Activated naive CD4-positive, alpha-beta T cell treated with anti-CD3 and anti-CD28 coated beads, Interleukin-2, amount 10 ng/mL, durations not matched to agents 7 days and 5 days (primary cell): ENCODE measurements at regions of chr9 and their contacts with region 1.

Region 1: DNA sequence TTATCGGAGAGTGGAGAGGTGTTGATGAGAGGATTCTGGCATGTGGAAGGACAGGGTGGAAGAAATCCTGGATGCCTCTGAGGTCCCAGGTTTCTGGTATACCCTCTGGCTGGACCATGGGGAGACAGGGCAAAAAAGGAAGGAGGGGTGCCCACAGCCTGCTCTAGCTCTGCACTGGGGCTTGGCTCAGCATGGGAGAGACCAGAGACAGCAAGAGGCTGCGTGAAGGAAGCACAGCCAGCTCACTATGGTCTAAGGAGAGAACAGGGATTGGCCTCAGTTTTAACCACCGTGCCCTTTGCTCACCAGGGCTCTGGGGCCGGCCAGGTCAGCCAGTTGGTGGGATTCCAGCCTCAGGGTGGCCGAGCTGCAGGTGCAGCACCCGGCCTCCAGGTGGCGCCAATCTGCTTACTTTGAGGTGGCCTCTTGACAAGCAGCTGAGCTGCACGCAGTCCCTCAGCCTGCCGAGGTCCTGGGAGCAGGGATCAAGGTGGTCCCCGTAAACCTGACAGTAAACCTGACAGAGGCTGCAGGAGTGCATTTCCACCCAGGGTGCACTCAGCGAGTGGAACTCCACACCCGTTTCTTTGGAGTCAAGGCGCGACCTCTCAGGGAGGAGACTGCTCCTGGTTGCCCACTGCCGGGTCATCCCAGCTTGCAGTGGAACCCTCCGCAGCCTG is 25.0 kb upstream of the SPTLC1 start:
- DNase-seq: peak; percentile 83
- H3K4me3 Mint-ChIP-seq: no peak overlapping the region
- H3K27ac Mint-ChIP-seq: no peak overlapping the region
- H3K4me1 Mint-ChIP-seq: peaks cover 7% of the 10 kb centered on the region
- H3K27me3 Mint-ChIP-seq: peaks cover 87% of the 10 kb centered on the region

Region 2: GRCh38 chr9:92115071-92115858 is 24.9 kb before region 1 on chr9 and contains the start of gene SPTLC1:
- CTCF ChIA-PET with region 1: interaction called, 12 read pairs
- DNase-seq: peak; percentile 95
- H3K4me3 Mint-ChIP-seq: peak within 1 kb of the TSS; percentile 98
- H3K27ac Mint-ChIP-seq: peak within 1 kb of the TSS; percentile 94
- H3K4me1 Mint-ChIP-seq: peaks cover 43% of the 10 kb centered on the region
- H3K27me3 Mint-ChIP-seq: peaks cover 14% of the 10 kb centered on the region

Region 3: GRCh38 chr9:92176068-92176799 is 36.0 kb after region 1 on chr9:
- CTCF ChIA-PET with region 1: interaction called, 12 read pairs
- DNase-seq: no peak
- H3K4me3 Mint-ChIP-seq: no peak overlapping the region
- H3K27ac Mint-ChIP-seq: no peak overlapping the region
- H3K4me1 Mint-ChIP-seq: no peaks in the 10 kb centered on the region
- H3K27me3 Mint-ChIP-seq: peaks cover 40% of the 10 kb centered on the region

Region 4: DNA sequence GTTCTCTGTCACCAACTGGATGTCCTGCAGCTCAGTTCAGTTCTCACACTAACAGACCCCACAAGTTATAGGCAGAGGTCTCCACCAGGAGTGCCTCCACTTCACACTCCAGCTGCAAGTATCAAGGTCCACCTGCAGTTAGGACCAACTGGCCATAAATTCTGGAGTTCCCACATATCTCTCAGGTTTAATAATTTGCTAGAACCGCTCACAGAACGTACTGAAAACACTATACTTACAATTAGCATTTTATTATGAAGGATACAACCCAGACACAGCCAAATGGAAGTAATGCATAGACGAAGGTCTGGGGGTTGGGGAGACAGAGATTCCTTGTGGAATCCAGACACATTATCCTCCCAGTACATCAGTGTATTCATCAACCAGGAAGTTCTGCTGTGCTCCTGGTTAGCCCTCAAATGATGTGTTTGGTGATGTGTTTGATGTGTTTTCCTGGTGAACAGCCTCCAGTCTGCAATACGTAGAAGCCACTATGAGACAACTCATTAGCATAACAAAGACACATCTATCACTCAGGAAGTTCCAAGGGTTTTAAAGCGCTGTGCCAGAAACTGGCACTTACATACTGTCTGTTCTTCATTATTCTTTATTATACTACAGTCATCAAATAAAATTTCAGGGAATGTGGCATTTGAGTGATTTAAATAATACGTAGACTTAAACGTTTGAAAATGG is 238.8 kb after region 1 on chr9:
- CTCF ChIA-PET with region 1: no interaction called
- DNase-seq: no peak
- H3K4me3 Mint-ChIP-seq: no peak overlapping the region
- H3K27ac Mint-ChIP-seq: no peak overlapping the region
- H3K4me1 Mint-ChIP-seq: peaks cover 23% of the 10 kb centered on the region
- H3K27me3 Mint-ChIP-seq: no peaks in the 10 kb centered on the region

Region 5: DNA sequence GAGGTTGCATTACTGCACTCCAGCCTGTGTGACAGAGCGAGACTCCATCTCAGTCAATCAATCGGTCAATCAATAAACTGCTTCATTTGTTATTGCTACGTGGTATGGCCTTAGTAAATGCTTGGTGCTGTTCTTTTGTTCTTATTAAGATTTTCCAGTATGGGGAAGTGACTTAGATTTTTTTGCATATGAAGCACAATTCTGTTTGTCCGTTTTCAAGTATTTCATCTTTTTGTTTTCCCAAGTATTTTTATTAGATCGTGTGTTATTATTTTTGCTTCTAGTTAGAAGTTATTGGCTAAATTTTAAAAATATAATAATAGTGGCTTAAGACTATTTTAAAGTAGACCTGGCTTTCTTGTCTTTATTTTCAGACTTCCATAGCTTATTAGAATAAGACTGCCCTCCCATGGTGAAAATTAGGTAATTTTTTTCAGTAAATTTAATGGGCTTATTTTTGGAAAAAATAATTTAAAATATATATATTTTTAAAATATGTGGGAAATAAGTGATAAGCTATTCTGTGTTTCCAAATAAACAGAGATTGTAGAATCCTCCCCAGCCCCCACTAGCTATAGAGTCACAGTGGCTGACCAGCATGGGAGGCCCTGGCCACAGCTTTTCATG is 298.8 kb after region 1 on chr9:
- CTCF ChIA-PET with region 1: interaction called, 11 read pairs
- DNase-seq: no peak
- H3K4me3 Mint-ChIP-seq: no peak overlapping the region
- H3K27ac Mint-ChIP-seq: no peak overlapping the region
- H3K4me1 Mint-ChIP-seq: peaks cover 13% of the 10 kb centered on the region
- H3K27me3 Mint-ChIP-seq: no peaks in the 10 kb centered on the region

Region 6: GRCh38 chr9:92790542-92791527 is 650.6 kb after region 1 on chr9:
- CTCF ChIA-PET with region 1: interaction called, 34 read pairs
- DNase-seq: peak; percentile 85
- H3K4me3 Mint-ChIP-seq: no peak overlapping the region
- H3K27ac Mint-ChIP-seq: no peak overlapping the region
- H3K4me1 Mint-ChIP-seq: peaks cover 6% of the 10 kb centered on the region
- H3K27me3 Mint-ChIP-seq: peaks cover 28% of the 10 kb centered on the region